ENCODE measurements at regions of chr1 and their contacts with region 1.

Region 1: DNA sequence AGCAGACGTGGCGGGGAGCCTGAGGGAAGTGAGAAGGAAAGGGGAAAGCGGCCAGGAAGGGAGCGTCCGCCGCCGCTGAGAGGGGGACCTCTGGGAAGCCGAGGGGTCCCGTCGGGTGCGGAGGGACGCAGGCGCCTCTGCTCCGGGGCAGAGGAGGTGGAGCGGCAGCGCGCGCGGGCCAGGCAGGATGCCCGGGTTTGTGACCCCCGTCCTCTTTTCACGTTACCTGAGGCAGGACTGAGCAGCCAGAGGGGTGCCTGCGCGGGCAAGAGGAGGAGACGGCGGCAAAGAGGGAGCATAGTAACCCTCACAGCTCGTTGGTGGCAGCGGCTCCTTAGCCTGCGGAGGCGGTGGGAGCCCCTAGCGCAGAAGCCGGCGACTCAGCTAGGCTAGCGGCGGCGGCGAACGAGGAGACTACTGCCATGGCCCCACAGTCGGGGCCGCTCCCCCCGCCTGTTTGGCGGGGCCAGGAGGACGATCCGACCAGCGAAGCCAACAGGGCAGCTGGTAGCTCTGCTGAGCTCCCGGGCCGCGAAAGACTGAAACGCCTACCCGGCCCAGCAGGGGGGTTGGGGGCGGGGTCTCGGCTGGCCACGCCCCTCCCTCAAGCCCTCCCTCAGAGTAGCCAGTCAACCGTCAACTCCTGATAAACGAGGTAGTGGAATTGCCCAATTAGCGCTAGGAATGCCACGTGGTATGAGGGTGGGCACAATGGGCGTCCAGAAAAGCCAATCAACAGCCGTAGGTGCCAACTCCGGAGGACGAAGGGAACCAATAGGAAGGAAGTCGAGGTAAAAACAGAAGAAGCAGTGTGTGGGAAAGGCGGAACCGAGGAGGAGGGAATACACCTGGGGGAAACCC is at the start of gene TESK2:
- DNase-seq: peak; percentile 99 to 100
- H3K4me3 ChIP-seq: peak within 1 kb of the TSS; percentile 77 to 89 (median 83)
- H3K27ac ChIP-seq: no peak within 1 kb of the TSS; the same call in 1 of the 2 replicates
- H3K4me1 ChIP-seq: peaks cover 0 to 8% (median 3%) of the 10 kb centered on the region in 4 experiments; a peak in 6 of 7 replicates
- H3K27me3 ChIP-seq: no peaks in the 10 kb centered on the region
- CTCF ChIP-seq: no peak
- EP300 ChIP-seq: no peak; a peak in 1 of 3 replicates
- POLR2A ChIP-seq: peak in 1 of 2 experiments; percentile 85; a peak in 2 of 3 replicates
- RAD21 ChIP-seq: 0 out of 4 replicates have a peak, but pooled peaks of 1 of the 2 experiments have one; percentile 0
- total RNA-seq, gene TESK2: 10.9 and 12.6 TPM in 2 replicates

Region 2: DNA sequence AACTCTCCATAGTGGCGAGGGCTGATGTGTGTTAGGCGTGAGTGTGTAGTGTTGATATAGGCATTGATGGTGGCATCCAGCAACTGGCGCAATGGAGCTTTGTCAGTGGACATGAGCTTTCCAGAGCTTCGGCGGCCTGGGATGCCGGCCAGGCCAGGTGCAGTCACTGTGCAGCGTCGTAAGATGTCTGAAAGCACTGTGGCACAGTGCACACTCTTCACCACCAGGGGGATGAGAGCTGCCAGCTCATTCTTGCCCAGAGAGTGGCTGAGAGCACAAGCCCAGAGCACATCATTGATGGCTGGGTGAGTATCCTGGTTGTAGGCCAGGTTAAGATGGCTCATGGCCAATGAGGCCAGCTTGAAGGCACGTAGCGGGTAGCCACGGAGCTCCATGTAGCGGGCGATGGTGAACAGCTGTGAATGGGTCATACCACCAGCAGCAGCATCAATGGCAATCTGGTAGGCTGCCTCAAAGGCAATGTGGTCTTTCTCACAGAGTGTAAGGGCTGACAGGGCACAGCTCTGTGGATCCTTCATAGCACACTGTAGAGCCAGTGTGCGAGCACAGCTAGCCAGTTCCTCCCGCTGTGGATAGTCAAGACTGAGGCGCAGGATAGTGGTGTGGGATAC is 472.1 kb before region 1 on chr1:
- CTCF ChIA-PET with region 1: interaction called, 22 read pairs
- POLR2A ChIA-PET with region 1: no interaction called
- DNase-seq: peak in 1 of 2 experiments; percentile 79
- H3K4me3 ChIP-seq: no peak overlapping the region
- H3K27ac ChIP-seq: no peak overlapping the region
- H3K4me1 ChIP-seq: no peaks in the 10 kb centered on the region
- H3K27me3 ChIP-seq: no peaks in the 10 kb centered on the region
- CTCF ChIP-seq: peak; percentile 87 to 97 (median 96)
- EP300 ChIP-seq: no peak
- POLR2A ChIP-seq: no peak
- RAD21 ChIP-seq: peak; percentile 84 to 86

Region 3: GRCh38 chr1:45326627-45327623 is 163.9 kb before region 1 on chr1 and contains the start of gene HPDL:
- CTCF ChIA-PET with region 1: interaction called, 6 read pairs
- POLR2A ChIA-PET with region 1: interaction called, 20 read pairs
- DNase-seq: peak; percentile 64 to 85
- H3K4me3 ChIP-seq: peak within 1 kb of the TSS; percentile 61 to 69 (median 64)
- H3K27ac ChIP-seq: peak within 1 kb of the TSS; percentile 65; the same call in 1 of the 2 replicates
- H3K4me1 ChIP-seq: peaks cover 8 to 24% (median 14%) of the 10 kb centered on the region in 4 experiments; a peak in 6 of 7 replicates
- H3K27me3 ChIP-seq: no peaks in the 10 kb centered on the region
- CTCF ChIP-seq: no peak
- EP300 ChIP-seq: peak in 1 of 2 experiments; percentile 15; a peak in 1 of 3 replicates
- POLR2A ChIP-seq: peak; percentile 77 to 100
- RAD21 ChIP-seq: peak; percentile 14 to 23; a peak in 1 of 4 replicates
- total RNA-seq, gene HPDL: 58.5 and 60.6 TPM in 2 replicates

Region 4: GRCh38 chr1:45339789-45340570 is 150.9 kb before region 1 on chr1 and contains the starts of genes MUTYH and TOE1:
- CTCF ChIA-PET with region 1: interaction called, 54 read pairs
- POLR2A ChIA-PET with region 1: interaction called, 19 read pairs
- DNase-seq: peak; percentile 88 to 95
- H3K4me3 ChIP-seq: peak within 1 kb of the TSS; percentile 84 to 97 (median 92)
- H3K27ac ChIP-seq: peak within 1 kb of the TSS; percentile 97
- H3K4me1 ChIP-seq: peaks cover 0 to 9% (median 6%) of the 10 kb centered on the region in 4 experiments; a peak in 6 of 7 replicates
- H3K27me3 ChIP-seq: no peaks in the 10 kb centered on the region
- CTCF ChIP-seq: no peak
- EP300 ChIP-seq: no peak
- POLR2A ChIP-seq: peak; percentile 94 to 96
- RAD21 ChIP-seq: no peak
- total RNA-seq, gene MUTYH: 51.9 TPM in 2 replicates
- total RNA-seq, gene TOE1: 14.5 and 15.2 TPM in 2 replicates

Region 5: DNA sequence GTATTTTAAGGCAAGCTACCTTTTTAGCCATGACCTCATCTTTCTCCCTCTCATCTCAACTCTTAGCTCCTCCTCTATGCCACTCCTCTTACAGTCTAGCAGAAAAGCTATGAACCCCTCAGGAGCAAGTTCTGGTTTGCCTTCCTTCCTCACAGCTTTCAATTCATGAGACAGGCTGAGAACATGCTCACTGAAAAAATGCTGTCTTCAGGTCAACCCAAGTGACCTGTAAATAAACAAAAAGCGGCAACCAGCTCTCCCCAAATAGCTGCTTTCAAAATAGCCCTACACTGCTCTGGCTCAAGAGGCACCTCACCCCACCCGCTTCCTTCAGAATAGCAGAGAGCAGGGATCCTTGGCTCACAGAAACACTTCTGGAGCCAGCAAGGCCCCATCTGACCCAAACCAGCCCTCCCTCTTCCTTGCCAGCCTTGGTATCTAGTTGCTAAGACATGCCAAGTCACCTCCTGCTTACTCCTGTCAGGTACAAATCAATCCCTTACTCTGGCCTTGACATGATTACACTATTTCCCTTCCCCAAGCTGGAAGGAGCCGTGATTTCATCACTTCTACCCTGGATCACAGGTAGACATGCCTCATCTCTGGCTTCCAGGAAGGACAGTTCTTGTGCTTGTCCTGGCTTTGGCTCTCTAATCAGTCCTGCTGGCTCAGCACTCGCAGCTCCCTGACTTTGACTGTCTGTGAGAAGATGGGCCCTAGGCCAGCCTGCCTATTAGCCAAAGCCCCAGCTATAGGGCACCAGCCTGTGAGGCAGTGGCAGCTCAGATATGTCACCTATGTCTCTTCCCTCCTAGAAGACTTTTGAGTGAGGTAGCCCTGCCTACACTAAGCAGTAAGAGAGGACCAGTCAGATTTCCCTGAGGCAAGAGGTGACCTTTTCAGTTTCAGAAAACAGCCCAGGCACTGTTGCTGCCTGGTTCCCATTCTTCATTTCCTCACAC is 141.9 kb before region 1 on chr1:
- CTCF ChIA-PET with region 1: interaction called, 54 read pairs
- POLR2A ChIA-PET with region 1: interaction called, 4 read pairs
- DNase-seq: no peak
- H3K4me3 ChIP-seq: no peak overlapping the region
- H3K27ac ChIP-seq: no peak overlapping the region
- H3K4me1 ChIP-seq: no peaks in the 10 kb centered on the region
- H3K27me3 ChIP-seq: no peaks in the 10 kb centered on the region
- CTCF ChIP-seq: no peak
- EP300 ChIP-seq: no peak
- POLR2A ChIP-seq: no peak
- RAD21 ChIP-seq: no peak

Region 6: GRCh38 chr1:45359882-45360513 is 130.9 kb before region 1 on chr1:
- CTCF ChIA-PET with region 1: interaction called, 194 read pairs
- POLR2A ChIA-PET with region 1: interaction called, 4 read pairs
- DNase-seq: no peak
- H3K4me3 ChIP-seq: no peak overlapping the region
- H3K27ac ChIP-seq: no peak overlapping the region
- H3K4me1 ChIP-seq: peaks cover 2 to 11% (median 8%) of the 10 kb centered on the region in 4 experiments
- H3K27me3 ChIP-seq: no peaks in the 10 kb centered on the region
- CTCF ChIP-seq: peak; percentile 18 to 61 (median 46)
- EP300 ChIP-seq: no peak
- POLR2A ChIP-seq: no peak
- RAD21 ChIP-seq: peak; percentile 78 to 83

Region 7: DNA sequence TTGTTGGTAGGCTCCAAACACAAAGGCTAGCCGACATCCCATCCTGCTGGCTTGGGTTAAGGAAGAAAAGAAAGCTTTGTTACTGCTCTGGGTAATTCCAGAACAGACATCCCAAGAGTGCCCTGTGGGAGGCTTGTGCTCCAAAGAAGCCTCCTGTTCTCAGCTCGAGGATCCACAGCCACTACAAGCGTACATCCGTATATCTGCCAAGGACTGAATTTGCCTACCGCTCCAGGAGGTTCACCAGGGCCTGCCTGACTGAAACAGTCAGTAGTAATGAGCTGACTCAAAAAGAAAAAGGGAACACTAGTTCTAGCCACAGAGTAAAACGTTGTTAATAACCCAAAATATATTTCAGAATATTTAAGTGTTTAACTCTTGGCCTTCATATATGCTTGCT is 125.8 kb before region 1 on chr1:
- CTCF ChIA-PET with region 1: interaction called, 194 read pairs
- POLR2A ChIA-PET with region 1: interaction called, 4 read pairs
- DNase-seq: no peak
- H3K4me3 ChIP-seq: no peak overlapping the region
- H3K27ac ChIP-seq: no peak overlapping the region
- H3K4me1 ChIP-seq: peaks cover 2 to 10% (median 6%) of the 10 kb centered on the region in 4 experiments
- H3K27me3 ChIP-seq: no peaks in the 10 kb centered on the region
- CTCF ChIP-seq: no peak
- EP300 ChIP-seq: no peak
- POLR2A ChIP-seq: no peak
- RAD21 ChIP-seq: no peak

Measured in H1 (cell line).